ENCODE measurements at regions of chr7 and their contacts with region 1.

Region 1: DNA sequence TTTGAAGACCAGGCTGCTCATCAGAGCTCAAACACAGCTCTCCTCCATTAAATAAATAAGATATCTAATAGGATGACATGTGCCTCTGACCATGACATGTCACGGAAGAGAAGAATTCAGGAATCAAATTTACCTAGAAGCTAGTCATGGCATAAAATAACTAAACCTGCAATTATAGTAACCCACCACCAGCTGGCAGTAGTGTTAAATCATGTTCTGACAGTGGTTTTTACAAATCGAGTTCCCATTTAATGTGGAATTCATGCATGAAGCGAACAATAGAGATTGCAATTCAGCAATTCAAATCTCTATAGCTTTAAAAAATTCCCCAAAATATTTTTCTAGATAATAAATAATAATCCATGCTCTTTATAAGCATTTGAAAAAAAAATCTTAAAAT is 74.6 kb upstream of the IKZF1 start:
- DNase-seq: no peak
- ATAC-seq: no peak
- H3K4me3 Mint-ChIP-seq: no peak overlapping the region
- H3K27ac Mint-ChIP-seq: no peak overlapping the region
- H3K4me1 Mint-ChIP-seq: peaks cover 42% of the 10 kb centered on the region
- H3K27me3 Mint-ChIP-seq: no peaks in the 10 kb centered on the region
- CTCF ChIP-seq: peak; percentile 98

Region 2: DNA sequence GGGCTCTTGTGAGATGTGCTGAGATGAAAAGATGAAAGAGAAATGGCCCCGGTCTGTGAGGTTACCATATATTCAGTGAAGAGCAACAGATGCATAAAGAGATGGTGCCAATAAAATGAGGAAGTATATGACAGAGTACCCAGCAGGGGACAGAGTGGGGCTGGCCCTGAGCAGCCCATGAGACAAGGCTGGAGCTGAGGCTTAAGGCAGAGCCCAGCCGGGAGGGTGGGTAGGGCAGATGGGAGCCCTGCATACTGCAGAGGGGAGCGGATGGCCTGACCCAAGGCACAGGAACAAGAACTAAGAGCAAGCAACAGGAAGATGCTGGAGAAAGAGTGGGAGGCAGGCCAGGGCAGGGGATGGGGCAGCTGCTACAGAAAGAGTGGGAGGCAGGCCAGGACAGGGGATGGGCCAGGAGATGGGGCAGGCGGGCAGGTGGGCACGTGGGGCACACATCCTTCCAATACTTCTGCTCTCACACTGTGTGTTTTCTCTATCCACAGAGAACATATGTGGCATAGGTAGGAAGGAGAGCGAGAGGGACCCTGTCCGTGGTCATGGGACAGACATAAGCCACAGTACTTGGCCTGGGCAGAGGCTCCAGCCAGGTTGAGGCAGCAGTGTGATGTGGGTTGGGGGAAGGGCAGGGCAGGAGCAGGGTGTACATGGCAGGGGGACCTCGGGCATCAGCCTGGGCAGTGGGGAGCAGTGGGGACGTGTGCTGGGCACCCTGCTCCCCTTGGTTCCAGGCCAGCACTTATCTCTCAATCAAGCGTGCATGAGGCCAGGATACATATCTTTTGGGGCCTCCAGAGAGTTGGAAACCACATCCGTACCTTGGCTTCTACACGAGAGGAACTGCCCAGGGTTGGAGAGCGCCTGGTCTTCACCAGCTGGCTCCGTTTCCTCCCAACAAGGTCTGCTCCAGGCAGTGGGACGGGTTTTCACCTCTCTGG is 17.0 kb before region 1 on chr7:
- CTCF ChIA-PET with region 1: interaction called, 66 read pairs
- POLR2A ChIA-PET with region 1: interaction called, 21 read pairs
- intact Hi-C with region 1: loop called (anchors 2 kb)
- DNase-seq: peak; percentile 55
- ATAC-seq: peak; percentile 31
- H3K4me3 Mint-ChIP-seq: peak overlapping the region; percentile 0
- H3K27ac Mint-ChIP-seq: peak overlapping the region; percentile 63
- H3K4me1 Mint-ChIP-seq: peaks cover 87% of the 10 kb centered on the region
- H3K27me3 Mint-ChIP-seq: no peaks in the 10 kb centered on the region
- CTCF ChIP-seq: no peak

Region 3: DNA sequence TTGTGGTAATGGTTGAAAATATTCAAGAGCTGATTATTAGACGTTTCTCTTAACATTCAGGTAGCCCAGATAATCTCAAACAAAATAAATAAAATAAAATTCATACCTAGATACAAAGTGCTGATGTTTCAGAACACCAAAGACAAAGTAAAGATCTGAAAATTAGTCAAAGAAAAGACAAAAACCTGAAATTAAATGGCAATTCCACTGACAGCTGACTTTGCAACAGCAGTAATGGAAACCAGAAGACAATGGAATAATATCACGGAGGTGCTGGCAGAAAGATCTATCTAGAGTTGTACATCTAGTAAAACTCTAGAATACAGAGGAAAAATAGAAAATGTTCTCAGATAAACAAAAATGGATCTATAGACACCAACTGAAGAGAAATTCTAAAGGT is 16.6 kb after region 1 on chr7:
- CTCF ChIA-PET with region 1: interaction called, 10 read pairs
- POLR2A ChIA-PET with region 1: no interaction called
- intact Hi-C with region 1: no loop called
- DNase-seq: no peak
- ATAC-seq: no peak
- H3K4me3 Mint-ChIP-seq: no peak overlapping the region
- H3K27ac Mint-ChIP-seq: no peak overlapping the region
- H3K4me1 Mint-ChIP-seq: peaks cover 13% of the 10 kb centered on the region
- H3K27me3 Mint-ChIP-seq: no peaks in the 10 kb centered on the region
- CTCF ChIP-seq: no peak

Region 4: DNA sequence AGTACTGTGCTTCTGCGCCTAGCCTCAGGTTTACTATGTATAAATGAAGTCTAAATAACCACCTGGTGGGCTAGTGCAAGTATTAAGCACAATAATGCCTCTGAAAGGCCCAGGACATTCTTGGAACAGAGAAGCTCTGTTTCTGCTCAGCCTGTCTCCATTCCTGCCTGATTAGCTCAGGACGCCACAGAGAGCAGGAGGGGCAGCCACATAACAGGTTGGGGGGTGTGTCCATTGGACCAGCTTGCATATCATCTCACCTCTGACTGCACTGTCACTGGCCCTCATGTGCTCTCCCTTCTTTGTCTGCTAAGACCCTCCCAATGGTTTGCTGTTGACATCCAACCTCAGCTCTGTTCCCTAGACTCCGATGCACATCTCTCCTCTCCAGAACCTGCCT is 21.8 kb after region 1 on chr7:
- CTCF ChIA-PET with region 1: interaction called, 10 read pairs
- POLR2A ChIA-PET with region 1: interaction called, 3 read pairs
- intact Hi-C with region 1: no loop called
- DNase-seq: no peak
- ATAC-seq: no peak
- H3K4me3 Mint-ChIP-seq: no peak overlapping the region
- H3K27ac Mint-ChIP-seq: no peak overlapping the region
- H3K4me1 Mint-ChIP-seq: peaks cover 23% of the 10 kb centered on the region
- H3K27me3 Mint-ChIP-seq: no peaks in the 10 kb centered on the region
- CTCF ChIP-seq: no peak

Region 5: DNA sequence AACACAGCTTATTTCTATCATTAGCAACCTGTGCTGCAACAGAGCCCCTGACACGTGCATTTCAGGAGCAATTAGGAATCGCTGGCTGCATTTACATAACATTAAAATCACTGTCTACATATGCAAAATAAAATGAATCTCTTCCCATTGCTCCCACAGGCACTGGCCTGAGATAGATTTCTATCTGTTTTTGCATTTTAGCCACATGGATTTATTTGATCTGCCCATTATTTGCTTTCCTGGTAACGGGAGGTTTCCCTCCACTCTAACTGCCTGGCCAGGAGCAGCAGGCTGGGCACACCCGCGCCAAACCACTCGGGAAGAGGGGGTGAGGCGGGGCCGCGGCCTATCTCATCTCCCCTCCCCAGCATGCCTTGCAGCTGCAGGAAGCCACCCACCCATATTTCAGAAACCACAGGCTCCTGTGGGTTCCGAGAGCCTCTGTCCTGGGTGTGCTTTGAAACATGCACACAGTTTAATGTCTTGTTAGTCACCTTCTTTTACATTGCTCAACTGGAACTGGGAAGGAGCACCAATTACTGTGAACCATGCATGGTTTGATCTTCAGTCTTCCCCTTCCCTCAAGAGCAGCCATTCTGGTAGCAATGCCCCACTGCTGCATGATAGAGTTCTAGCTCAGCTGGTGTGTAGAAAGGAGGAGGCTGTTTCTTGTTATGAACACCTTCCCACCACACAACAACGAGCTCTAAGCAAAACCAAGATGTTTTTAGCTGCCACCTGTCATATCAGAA is 36.8 kb after region 1 on chr7:
- CTCF ChIA-PET with region 1: interaction called, 48 read pairs
- POLR2A ChIA-PET with region 1: interaction called, 5 read pairs
- intact Hi-C with region 1: loop called (anchors 5 kb)
- DNase-seq: peak; percentile 92
- ATAC-seq: peak; percentile 62
- H3K4me3 Mint-ChIP-seq: peak overlapping the region; percentile 63
- H3K27ac Mint-ChIP-seq: peak overlapping the region; percentile 92
- H3K4me1 Mint-ChIP-seq: peaks cover 93% of the 10 kb centered on the region
- H3K27me3 Mint-ChIP-seq: no peaks in the 10 kb centered on the region
- CTCF ChIP-seq: no peak

Region 6: DNA sequence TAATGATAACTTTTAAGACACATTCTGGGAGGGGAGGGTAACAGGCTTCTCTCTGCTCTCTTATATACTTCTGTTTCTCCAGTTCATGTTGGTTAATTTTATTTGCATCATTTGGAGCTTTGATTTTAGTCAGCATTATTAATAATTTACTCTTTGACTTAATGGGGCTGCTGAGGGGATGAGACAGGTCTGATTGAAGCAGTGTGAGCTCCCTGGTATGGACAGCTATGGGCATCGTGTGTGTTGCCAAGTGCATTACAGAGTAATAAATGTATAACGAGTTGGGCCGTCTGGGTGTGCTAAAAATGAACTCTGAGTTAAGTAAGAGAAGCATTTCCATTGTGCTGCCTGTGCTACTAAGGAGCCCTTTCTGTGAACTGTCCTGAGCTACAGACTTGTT is 42.8 kb after region 1 on chr7:
- CTCF ChIA-PET with region 1: interaction called, 48 read pairs
- POLR2A ChIA-PET with region 1: interaction called, 5 read pairs
- intact Hi-C with region 1: loop called (anchors 5 kb)
- DNase-seq: no peak
- ATAC-seq: no peak
- H3K4me3 Mint-ChIP-seq: no peak overlapping the region
- H3K27ac Mint-ChIP-seq: no peak overlapping the region
- H3K4me1 Mint-ChIP-seq: peaks cover 77% of the 10 kb centered on the region
- H3K27me3 Mint-ChIP-seq: no peaks in the 10 kb centered on the region
- CTCF ChIP-seq: no peak

Measured in activated CD8-positive, alpha-beta T cell treated with anti-CD3 and anti-CD28 coated beads for 36 hours (primary cell).